HEK293 (cell line): ENCODE measurements at regions of chr1 and their contacts with region 1.

Region 1: GRCh38 chr1:234125283-234125682 is 220.8 kb downstream of the SLC35F3 start:
- H3K4me3 ChIP-seq: no peak overlapping the region
- H3K27ac ChIP-seq: no peak overlapping the region
- H3K4me1 ChIP-seq: no peaks in the 10 kb centered on the region
- CTCF ChIP-seq: peak; percentile 85

Region 2: DNA sequence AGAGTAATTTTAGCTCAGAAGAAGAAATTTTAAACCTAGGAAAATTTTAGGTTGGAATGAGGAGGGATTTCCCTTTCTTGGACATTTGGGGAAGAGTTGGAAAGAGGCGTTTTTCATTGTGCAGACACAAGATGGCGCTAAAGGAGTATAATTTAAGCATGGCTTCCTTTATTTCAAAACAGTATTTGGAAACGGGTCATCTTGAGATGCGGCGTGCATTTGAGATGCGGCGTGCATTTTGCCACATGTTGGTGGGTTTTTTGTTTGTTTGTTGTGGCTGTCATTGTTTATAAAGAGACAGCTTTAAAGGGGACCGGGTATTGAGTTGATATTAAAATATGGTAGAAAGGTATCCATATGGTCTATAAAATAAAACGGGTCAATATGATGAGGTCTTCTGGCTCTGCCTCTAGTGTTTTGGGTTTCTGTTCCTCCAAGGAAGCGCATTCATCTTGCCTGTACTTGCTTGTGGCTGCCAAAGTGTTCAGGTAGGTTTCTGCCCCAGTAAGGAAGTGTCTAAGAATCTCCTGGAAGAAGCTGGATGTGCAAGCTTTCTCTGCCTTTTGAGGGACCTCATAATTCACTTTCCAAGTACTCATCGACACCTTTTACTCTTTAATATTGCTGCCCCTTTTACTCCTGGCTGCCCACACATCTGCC is 10.5 kb before region 1 on chr1:
- CTCF ChIA-PET with region 1: interaction called, 67 read pairs
- POLR2A ChIA-PET with region 1: no interaction called
- H3K4me3 ChIP-seq: no peak overlapping the region
- H3K27ac ChIP-seq: no peak overlapping the region
- H3K4me1 ChIP-seq: no peaks in the 10 kb centered on the region
- CTCF ChIP-seq: peak; percentile 80

Region 3: DNA sequence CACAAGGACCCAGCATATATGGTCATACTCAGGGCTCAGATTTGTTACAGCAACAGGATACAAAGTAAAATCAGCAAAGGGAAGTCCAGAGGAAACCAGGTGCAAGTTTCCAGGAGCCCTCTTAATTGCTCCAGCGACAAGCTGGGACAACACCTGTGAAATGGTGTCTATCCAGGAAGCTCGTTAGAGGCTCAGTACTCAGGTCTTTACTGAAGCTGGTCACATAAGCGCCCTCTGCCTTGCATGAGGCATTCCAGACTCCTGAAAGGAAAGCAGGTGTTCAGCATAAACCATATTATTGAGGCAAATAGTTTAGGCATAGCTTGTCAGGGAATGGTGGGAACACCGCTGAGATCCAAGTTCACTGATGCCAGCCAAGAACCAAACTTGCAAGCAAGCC is 10.2 kb after region 1 on chr1:
- CTCF ChIA-PET with region 1: interaction called, 34 read pairs
- POLR2A ChIA-PET with region 1: no interaction called
- H3K4me3 ChIP-seq: no peak overlapping the region
- H3K27ac ChIP-seq: no peak overlapping the region
- H3K4me1 ChIP-seq: no peaks in the 10 kb centered on the region
- CTCF ChIP-seq: no peak

Region 4: GRCh38 chr1:234144901-234145300 is 19.6 kb after region 1 on chr1:
- CTCF ChIA-PET with region 1: interaction called, 15 read pairs
- POLR2A ChIA-PET with region 1: no interaction called
- H3K4me3 ChIP-seq: no peak overlapping the region
- H3K27ac ChIP-seq: no peak overlapping the region
- H3K4me1 ChIP-seq: no peaks in the 10 kb centered on the region
- CTCF ChIP-seq: no peak

Region 5: DNA sequence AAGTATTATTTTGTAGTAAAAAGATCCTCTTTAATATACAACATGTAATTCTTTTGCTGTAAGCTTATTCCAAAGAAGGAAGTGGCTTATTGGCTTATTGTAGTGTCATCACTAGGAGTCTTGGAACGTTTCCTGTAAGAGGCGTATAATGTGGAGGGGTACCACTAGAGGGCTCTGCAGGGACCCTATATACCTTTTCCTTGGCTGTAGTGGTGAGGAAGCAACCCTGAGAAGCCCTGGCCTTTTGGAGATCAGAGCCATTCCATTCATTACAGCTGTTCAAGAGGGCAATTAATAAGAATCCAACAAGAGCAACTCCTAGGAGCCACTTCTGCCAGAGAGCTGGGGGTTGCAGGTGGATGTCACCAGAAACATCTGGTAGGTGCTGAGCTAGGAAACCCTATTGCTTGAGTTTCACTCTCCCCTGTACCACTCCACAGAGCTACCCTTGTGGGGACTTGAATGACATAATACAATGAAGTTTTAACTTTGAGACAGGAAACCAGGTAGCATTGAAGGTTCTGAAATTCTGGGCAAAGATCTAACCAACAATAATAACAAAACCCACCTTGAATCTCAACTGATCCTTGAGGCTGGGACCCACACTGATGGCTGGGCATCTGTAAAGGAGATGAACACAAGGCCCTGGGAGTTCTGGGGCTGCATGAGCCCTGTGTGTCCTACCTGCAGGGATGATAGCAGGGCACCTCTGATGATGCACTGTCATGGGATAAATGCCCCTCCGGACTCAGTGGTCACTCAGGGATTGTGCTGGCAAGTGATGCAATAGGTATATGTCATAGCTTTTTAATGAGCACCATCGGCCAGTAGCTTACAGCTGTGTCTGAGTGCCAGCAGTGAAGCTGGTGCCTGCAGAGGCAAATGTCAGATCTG is 87.7 kb after region 1 on chr1:
- CTCF ChIA-PET with region 1: interaction called, 10 read pairs
- POLR2A ChIA-PET with region 1: no interaction called
- H3K4me3 ChIP-seq: no peak overlapping the region
- H3K27ac ChIP-seq: no peak overlapping the region
- H3K4me1 ChIP-seq: no peaks in the 10 kb centered on the region
- CTCF ChIP-seq: peak; percentile 50